ENCODE measurements at regions of chr11 and their contacts with region 1.

Region 1: DNA sequence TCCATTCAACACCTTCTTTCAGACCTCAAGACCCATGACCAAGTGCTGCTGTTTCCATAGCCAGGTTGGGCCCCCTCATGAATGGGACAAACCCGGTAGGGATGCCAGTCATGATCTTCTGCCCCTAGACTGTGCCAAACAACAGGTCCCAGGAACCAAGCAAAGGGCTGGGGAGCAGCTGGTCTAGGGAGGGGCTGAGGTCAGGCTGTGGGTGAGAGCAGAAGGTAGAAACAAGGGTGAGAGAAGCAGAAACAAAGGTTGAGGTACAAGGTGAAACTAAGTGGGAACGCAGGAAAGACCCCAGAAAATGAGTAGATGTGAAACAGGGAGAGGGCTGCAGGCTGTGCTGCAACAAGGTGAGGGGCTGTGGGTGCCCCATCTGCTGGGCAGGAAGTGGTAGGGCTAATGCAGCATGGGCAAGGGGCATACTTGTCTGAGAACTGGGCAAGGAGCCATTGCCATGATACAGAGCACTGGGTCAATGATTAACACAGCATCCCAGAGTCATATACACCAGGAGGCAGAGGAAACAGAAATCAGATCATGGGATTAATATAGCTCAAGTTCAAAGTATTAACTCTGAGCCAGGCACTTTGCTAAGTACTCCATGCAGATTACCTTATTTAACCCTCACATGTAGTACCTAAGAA is 45.9 kb downstream of the SLC1A2 start:
- DNase-seq: no peak
- H3K4me3 ChIP-seq: no peak overlapping the region
- H3K27ac ChIP-seq: no peak overlapping the region
- H3K4me1 ChIP-seq: peaks cover 0 to 6% (median 2%) of the 10 kb centered on the region in 4 donors
- H3K27me3 ChIP-seq: no peaks in the 10 kb centered on the region
- CTCF ChIP-seq: no peak
- EP300 ChIP-seq: no peak
- POLR2A ChIP-seq: no peak

Region 2: GRCh38 chr11:35082321-35083182 is 290.9 kb before region 1 on chr11:
- intact Hi-C with region 1: loop called (anchors 10 kb)
- DNase-seq: no peak
- H3K4me3 ChIP-seq: no peak overlapping the region
- H3K27ac ChIP-seq: peak overlapping the region; percentile 69 to 86 (median 83)
- H3K4me1 ChIP-seq: peaks cover 33 to 57% (median 53%) of the 10 kb centered on the region in 4 donors
- H3K27me3 ChIP-seq: no peaks in the 10 kb centered on the region
- CTCF ChIP-seq: no peak
- EP300 ChIP-seq: no peak
- POLR2A ChIP-seq: no peak

Measured in esophagus muscularis mucosa (tissue), 4 donors.